Heart right ventricle (tissue), 16 donors: ENCODE measurements at regions of chr3 and their contacts with region 1.

Region 1: DNA sequence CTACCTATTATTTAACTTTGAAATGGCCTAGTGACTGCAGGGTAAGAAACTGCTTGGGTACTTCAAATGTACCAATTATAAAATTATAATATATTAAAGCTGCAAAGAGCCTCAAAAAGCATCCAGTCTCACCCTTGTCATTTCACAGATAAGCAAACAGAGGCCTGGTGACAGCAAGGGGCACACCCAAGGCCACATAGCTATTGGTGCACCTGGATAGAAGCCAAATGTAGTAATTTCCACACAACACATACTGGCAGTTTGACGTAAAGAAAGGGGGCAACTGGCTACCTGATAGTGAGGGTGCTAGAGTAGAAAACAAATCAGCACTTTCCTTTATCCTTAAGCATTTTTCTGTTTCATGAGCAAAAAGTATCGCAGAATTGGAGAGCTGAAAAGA is 51.1 kb downstream of the IFT57 start:
- DNase-seq: no peak
- ATAC-seq: no peak
- H3K4me3 ChIP-seq: no peak overlapping the region
- H3K27ac ChIP-seq: no peak overlapping the region
- H3K4me1 ChIP-seq: no peaks in the 10 kb centered on the region
- H3K27me3 ChIP-seq: no peaks in the 10 kb centered on the region
- CTCF ChIP-seq: no peak

Region 2: GRCh38 chr3:108036984-108037741 is 133.9 kb before region 1 on chr3:
- intact Hi-C with region 1: no loop called
- DNase-seq: no peak
- ATAC-seq: peak in 7 of 8 donors; percentile 25 to 59 (median 42)
- H3K4me3 ChIP-seq: no peak overlapping the region
- H3K27ac ChIP-seq: peak overlapping the region in 1 of 10 donors; percentile 34
- H3K4me1 ChIP-seq: peaks cover 0 to 34% (median 18%) of the 10 kb centered on the region in 9 donors
- H3K27me3 ChIP-seq: no peaks in the 10 kb centered on the region
- CTCF ChIP-seq: no peak

Region 3: GRCh38 chr3:108124337-108125152 is 46.6 kb before region 1 on chr3:
- intact Hi-C with region 1: no loop called
- DNase-seq: no peak
- ATAC-seq: peak in 3 of 8 donors; percentile 38 to 39 (median 38)
- H3K4me3 ChIP-seq: peak overlapping the region in 1 of 10 donors; percentile 23
- H3K27ac ChIP-seq: peak overlapping the region in 1 of 10 donors; percentile 83
- H3K4me1 ChIP-seq: peaks cover 0 to 48% (median 0%) of the 10 kb centered on the region in 9 donors
- H3K27me3 ChIP-seq: no peaks in the 10 kb centered on the region
- CTCF ChIP-seq: no peak

Region 4: GRCh38 chr3:108159865-108160264 is 11.2 kb before region 1 on chr3:
- intact Hi-C with region 1: loop called in 1 of 10 experiments (anchors 1 kb)
- DNase-seq: no peak
- ATAC-seq: no peak
- H3K4me3 ChIP-seq: no peak overlapping the region
- H3K27ac ChIP-seq: no peak overlapping the region
- H3K4me1 ChIP-seq: peaks cover 0 to 17% (median 0%) of the 10 kb centered on the region in 9 donors
- H3K27me3 ChIP-seq: no peaks in the 10 kb centered on the region
- CTCF ChIP-seq: no peak

Region 5: GRCh38 chr3:108301695-108302404 is 130.7 kb after region 1 on chr3:
- intact Hi-C with region 1: no loop called
- DNase-seq: no peak
- ATAC-seq: no peak
- H3K4me3 ChIP-seq: no peak overlapping the region
- H3K27ac ChIP-seq: no peak overlapping the region
- H3K4me1 ChIP-seq: peaks cover 0 to 12% (median 4%) of the 10 kb centered on the region in 9 donors
- H3K27me3 ChIP-seq: no peaks in the 10 kb centered on the region
- CTCF ChIP-seq: no peak